ENCODE measurements at regions of chr9 and their contacts with region 1.

Region 1: DNA sequence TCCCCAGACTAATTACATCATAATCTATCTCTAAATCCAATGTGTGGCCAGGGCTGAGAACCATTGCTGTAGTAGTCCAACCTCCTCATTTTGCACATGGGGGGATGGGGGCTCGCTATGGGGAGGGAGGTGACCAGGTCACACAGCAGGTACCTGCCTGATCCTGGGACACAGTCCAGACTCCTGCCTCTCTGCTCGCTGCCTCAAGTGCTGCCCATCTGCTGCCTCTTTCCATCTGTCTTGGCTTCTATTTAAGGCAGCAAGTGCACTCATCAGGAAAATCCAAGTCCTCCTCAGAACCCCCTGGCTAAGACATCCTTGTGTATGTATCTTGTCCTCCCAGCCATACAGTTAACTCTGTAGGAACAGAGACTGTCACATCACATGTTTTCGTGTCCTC is 57.7 kb upstream of the FRRS1L start:
- DNase-seq: no peak
- H3K4me3 Mint-ChIP-seq: no peak overlapping the region
- H3K27ac Mint-ChIP-seq: no peak overlapping the region
- H3K4me1 Mint-ChIP-seq: no peaks in the 10 kb centered on the region
- H3K27me3 Mint-ChIP-seq: peaks cover 61% of the 10 kb centered on the region
- CTCF ChIP-seq: no peak

Region 2: GRCh38 chr9:109286571-109286977 is 61.8 kb after region 1 on chr9:
- CTCF ChIA-PET with region 1: no interaction called
- intact Hi-C with region 1: loop called (anchors 10 kb)
- DNase-seq: no peak
- H3K4me3 Mint-ChIP-seq: no peak overlapping the region
- H3K27ac Mint-ChIP-seq: no peak overlapping the region
- H3K4me1 Mint-ChIP-seq: peaks cover 6% of the 10 kb centered on the region
- H3K27me3 Mint-ChIP-seq: no peaks in the 10 kb centered on the region
- CTCF ChIP-seq: no peak

Measured in Calu3 (cell line).